RWPE1 (cell line): ENCODE measurements at regions of chr2 and their contacts with region 1.

Region 1: DNA sequence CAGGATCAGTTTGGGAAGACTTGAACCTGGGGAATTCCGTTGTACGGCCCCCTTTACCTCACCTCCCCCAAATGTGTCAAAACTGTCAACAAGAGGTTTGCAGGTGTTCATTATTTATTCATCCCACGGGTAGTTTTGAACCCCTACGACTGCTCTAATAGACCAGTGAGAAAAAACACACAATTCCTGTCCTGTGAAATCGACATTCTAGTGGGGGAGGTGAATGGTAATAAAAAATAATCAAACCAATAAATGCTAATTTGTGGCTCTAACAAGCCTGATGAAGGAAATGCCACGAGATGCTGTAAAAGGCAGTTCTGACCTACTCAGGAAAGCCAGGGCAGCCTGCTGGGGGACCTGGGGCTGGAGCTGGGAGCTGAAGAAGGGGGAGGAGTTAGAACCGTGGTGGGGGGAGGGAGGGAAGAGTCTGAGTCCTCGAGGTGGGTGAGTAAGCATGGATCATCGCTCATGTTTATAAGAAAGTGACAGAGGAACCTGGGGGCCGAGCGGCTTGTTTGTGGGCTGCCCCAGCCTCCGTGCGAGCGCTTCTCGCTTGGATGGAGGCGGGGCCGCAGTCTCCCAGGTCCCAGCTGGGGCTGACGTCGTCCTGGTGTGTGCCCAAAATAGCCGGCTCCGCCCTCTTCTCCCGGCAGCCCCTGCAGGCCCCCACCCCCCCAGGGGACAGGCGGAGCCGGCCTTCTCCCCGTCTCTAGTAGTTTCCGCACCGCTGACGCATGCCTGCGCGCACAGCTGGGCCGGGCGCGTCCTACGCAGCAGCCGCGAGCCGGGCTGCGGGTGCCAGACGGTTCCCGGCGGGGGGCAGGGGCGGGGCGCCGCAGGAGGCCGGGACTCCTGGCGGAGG is at the start of gene DNAJB2:
- DNase-seq: peak; percentile 99
- H3K27ac ChIP-seq: peak within 1 kb of the TSS; percentile 94
- CTCF ChIP-seq: no peak

Region 2: DNA sequence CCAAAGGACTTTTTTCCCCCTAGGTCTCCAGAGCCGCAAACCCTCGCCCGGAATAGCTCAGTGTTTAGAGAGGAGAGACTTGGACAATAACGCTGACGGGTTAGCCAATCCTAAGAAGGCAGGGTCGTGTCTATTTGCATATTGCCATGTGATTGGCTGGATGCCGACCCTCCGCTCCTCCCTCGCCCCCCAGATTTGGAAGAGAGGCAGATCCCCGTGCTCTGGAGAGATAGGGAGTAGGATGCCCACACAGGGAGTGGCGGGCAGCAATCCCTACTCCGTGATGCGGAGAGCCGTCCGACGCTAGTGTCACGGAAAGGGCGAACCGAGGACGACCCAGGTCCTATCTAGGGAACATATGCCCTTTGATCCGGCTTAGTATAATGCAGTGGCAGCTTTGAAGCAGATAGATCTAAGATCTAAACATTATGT is 417.9 kb before region 1 on chr2:
- CTCF ChIA-PET with region 1: no interaction called
- POLR2A ChIA-PET with region 1: no interaction called
- DNase-seq: peak; percentile 33
- H3K27ac ChIP-seq: no peak overlapping the region
- CTCF ChIP-seq: no peak

Region 3: DNA sequence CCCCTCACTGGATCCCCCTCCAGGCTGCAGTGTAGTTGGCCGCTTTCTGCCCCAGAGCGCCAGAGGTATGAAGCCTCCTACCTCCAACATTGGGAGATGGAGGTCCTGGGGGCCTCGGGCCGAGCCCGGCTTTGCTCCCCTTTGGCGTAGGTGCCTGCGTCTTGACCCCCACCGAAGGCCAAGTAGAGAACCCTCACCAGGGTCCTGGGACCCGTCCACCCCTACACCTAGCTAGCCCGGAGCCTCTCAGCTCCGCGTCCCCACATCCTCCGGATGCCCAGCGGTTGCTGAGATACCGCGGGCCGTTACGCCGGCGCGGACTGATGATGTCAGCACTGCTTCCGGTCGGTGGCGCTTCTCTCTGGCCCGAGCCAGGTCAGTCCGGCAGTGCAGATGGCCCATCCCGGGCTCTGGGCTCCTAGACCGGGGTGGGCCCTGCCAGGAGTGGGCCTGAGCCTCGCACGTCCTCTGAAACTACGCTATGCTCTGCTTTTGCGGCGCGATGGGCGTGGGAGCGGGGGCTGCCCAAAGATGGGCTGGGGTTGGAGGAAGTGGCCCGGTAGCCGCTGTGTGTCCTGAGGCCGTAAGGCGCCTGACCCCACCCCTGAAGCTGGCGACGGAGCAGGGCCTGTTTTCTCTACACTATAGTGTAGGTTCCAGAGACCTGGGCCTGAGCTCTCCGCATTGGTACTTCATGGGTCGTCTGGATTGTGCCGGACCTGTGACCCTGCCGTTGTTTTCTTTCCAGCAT is 33.6 kb before region 1 on chr2 and contains the starts of genes GLB1L and STK16:
- CTCF ChIA-PET with region 1: interaction called, 5 read pairs
- POLR2A ChIA-PET with region 1: interaction called, 14 read pairs
- DNase-seq: peak; percentile 84
- H3K27ac ChIP-seq: peak within 1 kb of the TSS; percentile 98
- CTCF ChIP-seq: no peak

Region 4: GRCh38 chr2:219253753-219254590 is 24.9 kb before region 1 on chr2 and contains the start of gene TUBA4A:
- CTCF ChIA-PET with region 1: interaction called, 22 read pairs
- POLR2A ChIA-PET with region 1: interaction called, 35 read pairs
- DNase-seq: peak; percentile 92
- H3K27ac ChIP-seq: peak within 1 kb of the TSS; percentile 98
- CTCF ChIP-seq: no peak

Region 5: DNA sequence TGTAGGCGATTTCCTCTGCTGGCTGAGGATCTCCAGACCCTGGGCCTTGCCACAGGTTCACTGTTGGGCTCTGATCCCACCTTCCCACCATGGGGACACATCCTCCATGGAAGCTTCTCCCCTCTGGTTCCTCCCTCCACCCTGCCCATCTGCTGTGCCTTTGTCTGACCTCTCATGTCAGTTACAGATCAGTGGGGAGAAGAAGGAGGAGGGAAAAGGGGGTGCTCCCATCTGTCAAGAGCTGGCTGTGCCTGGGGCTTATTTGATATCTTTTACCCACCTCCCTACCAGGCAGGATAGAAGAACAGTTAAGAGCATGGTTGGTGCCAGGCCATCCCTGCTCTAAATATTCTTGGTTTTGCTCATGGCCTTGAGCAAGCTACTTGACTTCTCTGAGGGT is 12.0 kb before region 1 on chr2:
- CTCF ChIA-PET with region 1: no interaction called
- POLR2A ChIA-PET with region 1: no interaction called
- DNase-seq: no peak
- H3K27ac ChIP-seq: no peak overlapping the region
- CTCF ChIP-seq: no peak

Region 6: GRCh38 chr2:219352448-219353023 is 73.7 kb after region 1 on chr2:
- CTCF ChIA-PET with region 1: no interaction called
- POLR2A ChIA-PET with region 1: no interaction called
- DNase-seq: peak; percentile 55
- H3K27ac ChIP-seq: no peak overlapping the region
- CTCF ChIP-seq: peak; percentile 63